Cardiac septum (tissue), 1 donor: ENCODE measurements at regions of chr9 and their contacts with region 1.

Region 1: DNA sequence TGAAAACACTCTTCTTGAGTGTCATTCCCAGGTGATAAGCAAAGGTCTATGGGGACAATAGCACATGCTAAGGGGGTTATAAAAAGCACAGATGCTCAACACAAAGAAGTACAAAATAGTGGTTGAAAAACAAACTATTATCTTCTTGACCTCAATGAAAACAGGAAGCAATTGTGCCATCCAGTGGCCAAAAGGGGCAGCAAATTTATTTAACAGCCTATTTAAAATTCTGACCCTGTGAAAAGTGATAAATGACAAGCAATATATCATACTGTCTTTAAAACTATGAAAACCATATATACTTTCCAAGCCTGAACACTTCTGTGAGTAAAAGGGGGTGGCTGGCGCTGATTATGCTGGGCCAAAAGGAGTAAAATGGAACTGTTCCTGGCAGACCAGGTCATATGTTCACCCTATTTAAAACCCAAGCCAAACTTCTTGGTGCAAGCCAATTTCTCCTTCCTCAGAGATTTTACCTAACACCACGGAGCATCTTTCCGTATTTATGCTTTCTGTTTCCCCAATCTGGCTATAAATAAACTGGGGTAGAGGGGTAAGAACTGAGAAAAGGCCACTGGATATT is 29.7 kb downstream of the TEX10 start:
- DNase-seq: no peak

Region 2: GRCh38 chr9:99184475-99185347 is 1138.3 kb before region 1 on chr9:
- intact Hi-C with region 1: loop called (anchors 10 kb)
- DNase-seq: peak; percentile 91

Region 3: DNA sequence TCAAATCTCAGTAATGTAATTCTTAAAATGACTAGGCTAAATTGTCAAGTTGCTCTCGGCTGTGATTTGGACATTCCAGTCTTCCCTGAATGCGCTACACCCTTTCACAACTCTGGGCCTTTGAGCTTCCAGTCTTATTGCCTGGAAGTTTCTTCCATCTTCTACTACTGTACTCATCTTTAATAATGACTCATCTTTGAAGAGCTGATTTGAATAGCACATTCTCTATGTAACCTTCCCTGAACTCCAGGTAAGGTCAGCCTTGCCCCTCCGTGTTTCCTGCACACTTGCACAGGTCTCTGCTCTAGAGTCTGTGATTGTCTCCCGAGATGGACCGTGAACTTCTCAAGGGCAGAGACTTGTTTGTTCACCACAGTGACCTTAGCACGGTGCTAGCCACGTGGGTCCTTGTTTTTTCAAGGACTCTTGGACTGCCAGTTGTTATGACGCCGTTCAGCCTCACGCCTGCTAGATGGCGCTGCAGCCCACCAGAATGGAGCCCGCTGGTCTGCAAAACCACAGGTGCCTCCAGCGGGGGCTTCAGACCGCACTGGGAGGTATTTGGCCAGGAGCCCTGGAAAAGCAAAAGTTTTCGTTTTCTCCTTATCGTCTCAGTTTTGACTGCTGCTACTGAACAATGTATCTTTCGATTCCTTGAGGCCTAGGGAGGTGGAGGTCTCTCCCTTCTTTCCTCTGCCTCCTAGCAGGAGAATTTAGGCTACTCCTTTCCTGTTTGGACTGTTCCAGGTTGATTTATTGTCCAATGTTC is 1056.6 kb before region 1 on chr9:
- intact Hi-C with region 1: loop called (anchors 10 kb)
- DNase-seq: peak; percentile 88

Region 4: GRCh38 chr9:100028201-100028784 is 294.8 kb before region 1 on chr9:
- intact Hi-C with region 1: loop called (anchors 5 kb)
- DNase-seq: no peak

Region 5: DNA sequence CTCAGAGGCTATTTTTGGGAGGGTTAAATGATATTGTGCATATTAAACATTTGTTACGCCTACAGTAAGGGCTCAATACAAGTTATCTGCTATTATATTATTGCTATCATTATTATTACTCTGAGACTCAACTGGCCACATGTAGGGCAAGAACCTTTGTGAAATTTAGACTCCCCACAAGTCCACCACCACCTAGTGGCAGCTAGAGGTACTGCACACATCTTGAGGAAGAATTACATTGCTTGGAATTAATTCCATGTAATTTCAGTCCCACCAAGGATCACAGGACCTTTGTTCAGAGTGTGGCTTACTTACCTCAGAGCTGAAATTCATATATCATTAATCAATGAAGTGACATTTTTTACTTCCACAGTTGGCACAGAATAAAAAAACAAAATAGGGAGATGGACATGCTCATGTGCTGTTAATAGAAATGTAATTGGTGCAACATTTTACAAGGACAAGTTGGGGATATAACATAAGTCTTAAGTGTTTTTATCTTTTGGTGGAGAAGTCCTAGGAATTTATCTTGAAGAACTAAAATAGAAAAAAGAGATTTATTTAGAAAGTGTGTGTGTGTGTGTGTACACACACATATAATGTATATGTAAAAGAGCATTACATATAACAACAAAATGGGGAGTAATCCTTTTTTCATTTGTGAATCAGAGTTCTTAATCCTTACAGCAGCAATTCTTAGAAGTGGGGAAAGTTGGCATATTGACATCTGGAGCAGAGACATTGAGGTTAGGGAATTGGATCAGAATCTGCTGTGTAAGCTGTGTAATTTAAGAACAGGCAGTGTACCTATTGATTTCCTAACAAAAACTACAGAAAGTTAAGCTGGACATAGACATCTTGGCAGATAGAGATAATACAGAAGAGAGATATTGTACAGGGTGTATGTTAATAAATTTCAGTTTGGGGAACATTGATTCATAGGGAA is 115.1 kb after region 1 on chr9:
- intact Hi-C with region 1: loop called (anchors 10 kb)
- DNase-seq: no peak